Posterior vena cava (tissue), 2 donors: ENCODE measurements at regions of chrX and their contacts with region 1.

Region 1: DNA sequence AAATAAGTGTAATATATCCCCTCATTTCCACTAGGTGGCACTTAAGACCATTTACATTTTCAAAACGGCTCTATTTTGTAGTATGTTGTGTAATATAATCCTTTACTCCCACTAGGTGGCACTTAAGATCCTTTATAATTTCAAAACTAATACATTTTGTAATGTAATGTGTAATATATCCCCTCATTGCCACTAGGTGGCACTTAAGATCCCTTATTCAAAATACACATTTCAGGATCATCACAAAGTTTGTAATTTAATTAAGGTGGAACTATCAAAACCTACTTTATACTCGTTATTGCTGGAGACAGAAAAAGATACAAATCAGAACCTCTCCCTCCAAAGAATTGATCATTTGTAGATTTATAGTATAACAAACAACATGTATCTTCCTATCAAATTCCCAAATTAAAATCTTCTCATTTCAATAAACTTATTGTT is 132.5 kb downstream of the ARHGAP6 start:
- DNase-seq: no peak

Region 2: GRCh38 chrX:11143931-11144678 is 389.1 kb before region 1 on chrX:
- intact Hi-C with region 1: loop called in 1 of 2 experiments (anchors 10 kb)
- DNase-seq: no peak

Region 3: GRCh38 chrX:11758400-11759171 is 225.4 kb after region 1 on chrX:
- intact Hi-C with region 1: loop called in 1 of 2 experiments (anchors 10 kb)
- DNase-seq: peak; percentile 96